Endothelial cell of umbilical vein (primary cell): ENCODE measurements at regions of chr20 and their contacts with region 1.

Region 1: DNA sequence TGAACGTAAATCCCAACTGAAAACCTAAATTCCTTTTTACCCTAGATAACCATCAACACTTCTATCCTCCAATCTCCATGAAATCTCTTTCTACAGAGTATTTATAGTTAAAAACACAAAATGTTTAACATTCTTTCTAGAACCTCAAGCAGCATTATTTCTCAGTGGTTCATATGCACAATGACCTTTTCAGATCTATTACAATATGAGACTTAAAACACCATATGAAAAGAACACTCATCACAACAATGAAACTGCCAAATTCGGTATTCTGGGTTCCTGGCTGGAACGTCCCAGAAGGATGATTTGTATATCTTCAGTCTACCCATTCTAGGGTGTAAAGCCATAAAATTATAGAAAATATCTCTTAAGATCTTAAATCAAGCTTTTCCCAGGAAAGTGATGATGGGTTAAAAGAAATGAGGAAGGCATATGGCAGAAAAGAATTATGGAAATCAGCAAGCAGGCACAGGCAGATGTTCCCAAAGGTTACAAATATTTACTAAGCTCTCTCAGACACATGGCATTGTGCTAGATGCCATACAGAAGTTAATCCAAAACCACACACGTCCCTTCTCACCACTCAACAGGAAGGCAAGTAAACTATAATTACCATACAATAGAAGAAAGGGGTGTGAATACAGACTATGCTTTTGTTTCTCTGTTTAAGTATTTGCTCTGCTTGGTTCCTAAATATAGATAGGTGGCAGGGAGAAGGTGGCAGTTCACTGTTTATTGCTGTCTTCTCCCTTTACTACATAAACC is 118.0 kb downstream of the CHD6 start:
- DNase-seq: no peak
- H3K4me3 ChIP-seq: no peak overlapping the region
- H3K27ac ChIP-seq: no peak overlapping the region
- H3K4me1 ChIP-seq: no peaks in the 10 kb centered on the region
- H3K27me3 ChIP-seq: no peaks in the 10 kb centered on the region
- CTCF ChIP-seq: no peak
- POLR2A ChIP-seq: no peak

Region 2: GRCh38 chr20:41476013-41476752 is 24.0 kb before region 1 on chr20:
- CTCF ChIA-PET with region 1: no interaction called
- POLR2A ChIA-PET with region 1: no interaction called
- dilution Hi-C with region 1: no loop called
- intact Hi-C with region 1: no loop called
- DNase-seq: peak; percentile 97
- H3K4me3 ChIP-seq: no peak overlapping the region
- H3K27ac ChIP-seq: no peak overlapping the region
- H3K4me1 ChIP-seq: peaks cover 12% of the 10 kb centered on the region
- H3K27me3 ChIP-seq: no peaks in the 10 kb centered on the region
- CTCF ChIP-seq: no peak
- POLR2A ChIP-seq: no peak

Region 3: GRCh38 chr20:41553142-41553880 is 53.2 kb after region 1 on chr20:
- CTCF ChIA-PET with region 1: no interaction called
- POLR2A ChIA-PET with region 1: no interaction called
- dilution Hi-C with region 1: no loop called
- intact Hi-C with region 1: loop called (anchors 10 kb)
- DNase-seq: no peak
- H3K4me3 ChIP-seq: no peak overlapping the region
- H3K27ac ChIP-seq: no peak overlapping the region
- H3K4me1 ChIP-seq: no peaks in the 10 kb centered on the region
- H3K27me3 ChIP-seq: no peaks in the 10 kb centered on the region
- CTCF ChIP-seq: no peak
- POLR2A ChIP-seq: no peak